HepG2 (cell line): ENCODE measurements at regions of chr4 and their contacts with region 1.

Region 1: DNA sequence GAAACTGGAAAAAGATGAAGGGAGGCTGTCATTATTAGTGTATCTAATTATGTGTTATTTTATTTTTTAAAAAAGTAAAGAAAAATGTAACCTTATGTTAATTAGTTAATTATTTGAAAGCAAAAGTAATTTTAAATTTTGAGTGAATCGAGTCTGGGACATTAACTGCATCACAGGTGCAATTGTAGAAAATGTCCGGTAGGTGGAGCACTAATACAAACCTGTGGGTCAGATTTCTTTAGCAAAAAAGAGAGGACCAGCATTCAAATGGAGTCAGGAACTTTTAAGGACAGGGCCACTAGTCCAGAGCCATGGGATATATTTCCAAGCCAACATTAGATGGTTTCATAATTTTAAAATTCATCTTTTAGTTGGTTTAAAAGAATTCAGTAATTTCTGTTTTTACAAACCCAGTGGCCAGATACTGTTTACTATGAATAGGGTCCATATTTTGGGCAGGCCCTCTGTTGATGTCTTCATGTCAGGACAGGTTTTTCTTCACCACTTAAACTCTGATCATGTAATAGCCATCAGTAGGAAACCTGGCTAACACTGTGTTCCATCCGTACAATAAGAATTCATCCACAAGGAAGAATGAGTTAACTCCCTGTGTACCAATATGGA is 27.2 kb downstream of the BST1 start:
- DNase-seq: peak; percentile 45
- ATAC-seq: peak; percentile 61
- H3K4me3 ChIP-seq: no peak overlapping the region
- H3K27ac ChIP-seq: no peak overlapping the region
- H3K4me1 ChIP-seq: no peaks in the 10 kb centered on the region
- H3K27me3 ChIP-seq: peaks cover 0 to 4% of the 10 kb centered on the region in 2 experiments; a peak in 1 of 5 replicates
- CTCF ChIP-seq: peak; percentile 70
- EP300 ChIP-seq: no peak
- POLR2A ChIP-seq: no peak
- RAD21 ChIP-seq: peak; percentile 24; the same call in 1 of the 2 replicates

Region 2: DNA sequence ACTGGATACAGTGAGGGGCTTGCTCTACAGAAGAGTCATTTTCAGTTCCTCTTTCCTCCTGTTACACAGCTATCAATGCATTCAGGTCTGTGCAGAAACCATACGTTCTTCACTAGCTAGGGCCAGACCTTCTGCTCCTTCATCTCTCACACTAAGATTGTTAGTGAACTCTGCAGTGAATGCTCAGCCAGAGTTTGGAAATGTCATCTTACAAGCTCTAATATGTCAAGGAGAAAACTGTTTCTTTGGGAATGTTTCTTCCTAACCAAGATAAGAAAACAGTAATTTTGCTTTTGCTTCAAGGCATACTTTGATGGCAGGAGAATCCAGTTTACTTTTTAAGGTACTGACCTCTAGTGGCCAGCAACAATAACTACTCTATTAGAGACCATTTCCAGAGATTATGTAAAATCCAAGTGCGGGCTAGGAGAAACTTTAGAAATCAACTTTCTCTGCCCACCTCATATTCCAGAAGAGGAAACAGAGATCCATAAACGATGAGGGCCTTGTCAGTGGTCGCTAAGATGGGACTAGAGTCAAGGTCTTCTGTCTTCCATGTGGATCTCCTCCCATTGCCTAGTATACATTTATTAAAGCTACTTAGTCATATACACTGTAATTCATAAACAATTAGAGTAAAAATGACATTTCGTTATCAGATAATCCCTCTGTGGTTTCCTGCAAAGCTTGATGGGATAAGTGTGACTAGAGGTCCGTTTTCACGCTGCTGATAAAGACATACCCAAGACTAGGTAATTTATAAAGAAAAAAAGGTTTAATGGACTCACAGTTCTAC is 272.4 kb before region 1 on chr4:
- CTCF ChIA-PET with region 1: no interaction called
- POLR2A ChIA-PET with region 1: no interaction called
- in situ Hi-C with region 1: no loop called
- intact Hi-C with region 1: no loop called
- DNase-seq: peak; percentile 24
- ATAC-seq: peak; percentile 80
- H3K4me3 ChIP-seq: no peak overlapping the region
- H3K27ac ChIP-seq: no peak overlapping the region
- H3K4me1 ChIP-seq: no peaks in the 10 kb centered on the region
- H3K27me3 ChIP-seq: no peaks in the 10 kb centered on the region
- CTCF ChIP-seq: peak; percentile 69
- EP300 ChIP-seq: no peak
- POLR2A ChIP-seq: no peak
- RAD21 ChIP-seq: no peak

Region 3: GRCh38 chr4:15756361-15756861 is 26.4 kb after region 1 on chr4:
- CTCF ChIA-PET with region 1: interaction called, 3 read pairs
- POLR2A ChIA-PET with region 1: no interaction called
- in situ Hi-C with region 1: no loop called
- intact Hi-C with region 1: loop called (anchors 1 kb)
- DNase-seq: peak; percentile 16
- ATAC-seq: peak; percentile 98
- H3K4me3 ChIP-seq: no peak overlapping the region
- H3K27ac ChIP-seq: no peak overlapping the region
- H3K4me1 ChIP-seq: peaks cover 5% of the 10 kb centered on the region; the same call in 1 of the 2 replicates
- H3K27me3 ChIP-seq: peaks cover 0 to 2% of the 10 kb centered on the region in 2 experiments; a peak in 2 of 5 replicates
- CTCF ChIP-seq: peak; percentile 57
- EP300 ChIP-seq: no peak
- POLR2A ChIP-seq: no peak
- RAD21 ChIP-seq: no peak

Region 4: GRCh38 chr4:15805583-15806517 is 75.8 kb after region 1 on chr4:
- CTCF ChIA-PET with region 1: no interaction called
- POLR2A ChIA-PET with region 1: no interaction called
- in situ Hi-C with region 1: no loop called
- intact Hi-C with region 1: loop called (anchors 2 kb)
- DNase-seq: peak; percentile 53
- ATAC-seq: peak; percentile 81
- H3K4me3 ChIP-seq: no peak overlapping the region
- H3K27ac ChIP-seq: no peak overlapping the region
- H3K4me1 ChIP-seq: no peaks in the 10 kb centered on the region
- H3K27me3 ChIP-seq: peaks cover 2 to 8% of the 10 kb centered on the region in 2 experiments; a peak in 2 of 5 replicates
- CTCF ChIP-seq: peak; percentile 76
- EP300 ChIP-seq: no peak
- POLR2A ChIP-seq: no peak
- RAD21 ChIP-seq: 0 out of 2 replicates have a peak, but pooled peaks have one; percentile 24